Activated CD8-positive, alpha-beta memory T cell treated with anti-CD3 and anti-CD28 coated beads, Interleukin-2, amount 10 ng/mL, durations not matched to agents 7 days and 5 days (primary cell): ENCODE measurements at regions of chr4 and their contacts with region 1.

Region 1: DNA sequence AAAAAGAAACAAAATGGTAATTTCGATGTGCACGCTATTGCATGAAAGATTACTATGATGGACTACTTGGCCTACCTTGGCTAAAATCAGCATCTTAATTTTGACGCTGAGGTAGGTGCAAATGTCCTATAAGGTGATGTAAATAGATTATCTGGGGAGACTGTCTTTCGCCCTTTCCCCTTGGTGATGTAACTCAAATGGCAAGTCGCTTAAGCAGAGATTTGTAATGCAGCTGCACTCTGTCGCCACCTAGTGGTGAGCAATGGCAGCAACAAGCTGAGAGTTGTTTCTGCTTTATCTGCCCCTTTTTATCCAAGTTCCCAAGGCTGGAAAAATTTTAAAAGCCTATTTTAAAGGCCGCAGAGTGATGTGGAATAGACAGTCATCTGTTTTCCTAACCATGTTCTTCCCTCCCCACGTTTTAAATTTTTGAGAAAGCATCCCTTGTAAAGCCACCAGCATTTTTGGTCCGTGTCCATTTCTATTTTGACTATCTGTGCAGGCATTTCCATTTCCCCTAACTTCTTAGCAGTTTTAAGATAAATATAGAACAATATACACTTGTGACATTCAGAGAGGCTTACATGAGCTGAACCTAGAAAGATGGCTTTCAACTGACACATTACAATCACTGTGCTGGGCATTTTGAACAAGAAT is 62.4 kb upstream of the PDLIM3 start:
- DNase-seq: peak; percentile 74
- ATAC-seq: peak; percentile 57
- H3K4me3 Mint-ChIP-seq: no peak overlapping the region
- H3K27ac Mint-ChIP-seq: no peak overlapping the region
- H3K4me1 Mint-ChIP-seq: no peaks in the 10 kb centered on the region
- H3K27me3 Mint-ChIP-seq: peaks cover 43% of the 10 kb centered on the region

Region 2: GRCh38 chr4:185416955-185417354 is 180.7 kb before region 1 on chr4:
- CTCF ChIA-PET with region 1: no interaction called
- DNase-seq: no peak
- ATAC-seq: no peak
- H3K4me3 Mint-ChIP-seq: no peak overlapping the region
- H3K27ac Mint-ChIP-seq: no peak overlapping the region
- H3K4me1 Mint-ChIP-seq: peaks cover 3% of the 10 kb centered on the region
- H3K27me3 Mint-ChIP-seq: no peaks in the 10 kb centered on the region

Region 3: DNA sequence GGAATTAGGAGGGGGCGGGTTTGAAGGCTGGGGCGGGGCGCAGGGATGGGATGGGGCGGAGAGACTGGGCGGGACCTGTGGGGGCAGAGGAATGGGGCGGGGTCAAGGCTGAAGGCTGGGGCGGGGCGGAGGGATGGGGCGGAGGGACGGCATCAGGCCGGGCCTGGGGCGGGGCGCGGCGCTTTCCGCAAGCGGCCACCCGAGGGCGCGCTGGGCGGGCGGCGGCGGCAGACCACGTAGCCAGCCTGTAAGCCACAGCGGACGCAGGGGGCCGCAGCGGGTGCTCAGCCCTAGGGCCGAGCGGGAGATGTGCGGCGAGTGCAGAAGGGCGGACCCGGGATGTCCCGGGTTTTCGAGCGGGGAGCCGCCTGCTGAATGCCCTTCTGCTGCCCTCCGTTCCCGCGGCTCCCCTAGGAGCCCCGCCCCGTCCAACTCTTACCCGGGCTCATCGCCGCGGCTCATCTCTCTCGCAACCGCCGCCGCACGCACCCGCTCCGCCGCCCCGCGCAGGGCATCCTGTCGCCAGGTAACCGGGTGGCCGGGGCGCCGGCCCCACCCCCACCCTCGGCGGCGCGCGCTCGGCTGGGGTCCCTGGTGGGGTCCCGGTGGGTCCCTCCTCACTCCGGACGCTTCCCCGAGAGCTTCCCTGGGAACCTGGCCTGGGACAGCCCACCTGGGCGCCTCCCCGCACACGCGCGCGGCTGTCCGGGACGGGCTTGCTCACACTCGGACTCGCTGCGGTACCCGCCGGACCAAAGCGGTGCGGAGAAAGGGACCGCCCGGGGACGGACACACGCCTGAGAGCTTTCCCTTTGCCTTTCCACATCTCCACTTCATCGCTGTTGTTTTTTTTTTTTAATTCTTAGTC is 126.2 kb before region 1 on chr4 and contains the start of gene CCDC110:
- CTCF ChIA-PET with region 1: interaction called, 16 read pairs
- DNase-seq: peak; percentile 92
- ATAC-seq: peak; percentile 95
- H3K4me3 Mint-ChIP-seq: peak within 1 kb of the TSS; percentile 79
- H3K27ac Mint-ChIP-seq: peak within 1 kb of the TSS; percentile 56
- H3K4me1 Mint-ChIP-seq: peaks cover 8% of the 10 kb centered on the region
- H3K27me3 Mint-ChIP-seq: peaks cover 53% of the 10 kb centered on the region
- total RNA-seq, gene CCDC110: not detected

Region 4: DNA sequence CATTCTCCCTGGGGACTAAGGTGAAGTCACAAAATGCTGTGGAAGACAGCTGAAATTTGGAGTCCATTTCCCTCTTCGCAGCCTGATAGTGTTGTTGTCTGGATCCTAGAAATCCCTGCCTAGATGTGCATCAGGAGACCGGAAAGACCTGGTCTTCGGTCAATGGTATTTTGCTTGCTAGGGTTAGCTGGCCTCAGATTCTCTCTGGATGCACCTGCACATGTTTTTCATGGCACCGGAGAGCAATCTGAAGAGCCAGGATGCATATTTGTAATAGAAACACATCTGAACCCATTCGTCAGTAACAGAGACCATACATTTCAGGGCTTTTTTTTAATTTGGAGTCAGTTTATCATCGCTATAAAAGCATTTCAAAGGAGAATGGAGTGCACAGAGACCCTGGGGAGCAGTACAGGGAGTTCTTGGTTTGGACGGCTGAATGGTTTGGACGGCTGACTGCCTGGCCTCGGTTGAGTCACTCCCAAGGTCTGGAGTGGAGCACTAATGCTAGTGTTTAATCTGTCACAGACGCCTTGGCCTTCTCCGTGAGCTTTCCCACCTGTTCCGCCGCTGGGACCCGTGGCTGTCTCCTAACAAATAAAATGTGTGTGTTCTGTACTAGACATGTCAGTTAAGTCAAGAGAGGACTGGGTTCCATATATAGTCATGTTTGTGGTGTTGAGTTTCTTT is 54.9 kb before region 1 on chr4:
- CTCF ChIA-PET with region 1: no interaction called
- DNase-seq: no peak
- ATAC-seq: no peak
- H3K4me3 Mint-ChIP-seq: no peak overlapping the region
- H3K27ac Mint-ChIP-seq: no peak overlapping the region
- H3K4me1 Mint-ChIP-seq: no peaks in the 10 kb centered on the region
- H3K27me3 Mint-ChIP-seq: peaks cover 22% of the 10 kb centered on the region

Region 5: GRCh38 chr4:185582651-185583400 is 14.8 kb before region 1 on chr4:
- CTCF ChIA-PET with region 1: interaction called, 12 read pairs
- DNase-seq: no peak
- ATAC-seq: no peak
- H3K4me3 Mint-ChIP-seq: no peak overlapping the region
- H3K27ac Mint-ChIP-seq: no peak overlapping the region
- H3K4me1 Mint-ChIP-seq: peaks cover 9% of the 10 kb centered on the region
- H3K27me3 Mint-ChIP-seq: peaks cover 37% of the 10 kb centered on the region

Region 6: GRCh38 chr4:185608185-185608584 is 10.5 kb after region 1 on chr4:
- CTCF ChIA-PET with region 1: interaction called, 11 read pairs
- DNase-seq: no peak
- ATAC-seq: no peak
- H3K4me3 Mint-ChIP-seq: no peak overlapping the region
- H3K27ac Mint-ChIP-seq: no peak overlapping the region
- H3K4me1 Mint-ChIP-seq: no peaks in the 10 kb centered on the region
- H3K27me3 Mint-ChIP-seq: peaks cover 15% of the 10 kb centered on the region